ENCODE measurements at regions of chr1 and their contacts with region 1.

Region 1: GRCh38 chr1:102434421-102434820 is 437.7 kb upstream of the OLFM3 start:
- DNase-seq: peak; percentile 10
- ATAC-seq: peak; percentile 42; the same call in 1 of the 2 replicates
- H3K4me3 ChIP-seq: no peak overlapping the region
- H3K27ac ChIP-seq: no peak overlapping the region
- H3K4me1 ChIP-seq: no peaks in the 10 kb centered on the region
- H3K27me3 ChIP-seq: no peaks in the 10 kb centered on the region
- CTCF ChIP-seq: peak; percentile 10 to 56 (median 41); a peak in 4 of 6 replicates
- POLR2A ChIP-seq: no peak
- RAD21 ChIP-seq: peak; percentile 53

Region 2: DNA sequence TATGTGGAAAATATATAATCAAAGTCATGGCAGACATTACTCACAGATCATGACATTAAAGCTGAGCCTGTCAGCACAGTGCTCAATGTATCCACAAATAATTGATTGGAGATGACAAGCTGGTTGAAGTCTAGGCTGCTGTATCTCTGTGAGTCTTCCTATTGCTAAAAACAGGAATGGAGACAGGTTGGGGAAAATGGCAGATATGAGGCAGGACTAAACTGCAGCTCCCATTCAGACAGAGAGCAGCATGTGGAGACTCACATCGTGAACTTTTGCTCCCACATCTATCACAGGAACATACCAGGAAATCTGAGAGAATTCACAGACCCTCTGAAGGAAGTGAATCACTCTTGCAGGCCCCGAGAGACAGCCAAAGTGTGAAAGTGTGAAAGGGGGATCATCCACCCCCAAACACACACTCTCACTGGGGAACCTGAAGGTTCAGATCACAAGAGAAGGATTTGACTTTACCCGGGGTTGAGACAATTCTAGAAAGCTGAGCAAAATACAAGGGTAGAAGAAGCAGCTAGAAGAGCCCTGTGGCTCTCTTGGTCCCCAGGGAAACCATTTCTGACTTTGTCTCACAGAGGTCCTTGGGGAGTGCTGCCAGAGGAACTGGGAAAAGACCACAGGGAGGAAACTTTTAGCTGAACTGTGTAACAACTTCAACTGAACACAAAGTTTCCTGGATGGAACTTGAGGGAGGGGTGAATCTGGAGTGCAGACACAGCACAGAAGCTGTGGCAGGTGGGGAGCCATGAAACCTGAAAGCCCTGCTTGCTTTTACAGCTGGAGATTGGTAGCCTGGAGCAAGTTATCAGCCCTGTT is 1024.2 kb before region 1 on chr1:
- CTCF ChIA-PET with region 1: no interaction called
- POLR2A ChIA-PET with region 1: no interaction called
- RAD21 ChIA-PET with region 1: no interaction called
- intact Hi-C with region 1: no loop called
- DNase-seq: no peak
- ATAC-seq: no peak
- H3K4me3 ChIP-seq: no peak overlapping the region
- H3K27ac ChIP-seq: no peak overlapping the region
- H3K4me1 ChIP-seq: no peaks in the 10 kb centered on the region
- H3K27me3 ChIP-seq: no peaks in the 10 kb centered on the region
- CTCF ChIP-seq: no peak
- POLR2A ChIP-seq: no peak
- RAD21 ChIP-seq: no peak

Region 3: GRCh38 chr1:101820071-101820470 is 614.4 kb before region 1 on chr1:
- CTCF ChIA-PET with region 1: no interaction called
- POLR2A ChIA-PET with region 1: no interaction called
- RAD21 ChIA-PET with region 1: no interaction called
- intact Hi-C with region 1: loop called (anchors 5 kb)
- DNase-seq: peak; percentile 16
- ATAC-seq: peak; percentile 57; the same call in 1 of the 2 replicates
- H3K4me3 ChIP-seq: no peak overlapping the region
- H3K27ac ChIP-seq: no peak overlapping the region
- H3K4me1 ChIP-seq: no peaks in the 10 kb centered on the region
- H3K27me3 ChIP-seq: no peaks in the 10 kb centered on the region
- CTCF ChIP-seq: peak in 2 of 3 experiments; percentile 29 to 38; a peak in 2 of 6 replicates
- POLR2A ChIP-seq: no peak
- RAD21 ChIP-seq: peak; percentile 58

Region 4: GRCh38 chr1:102296116-102296515 is 138.3 kb before region 1 on chr1:
- CTCF ChIA-PET with region 1: no interaction called
- POLR2A ChIA-PET with region 1: no interaction called
- RAD21 ChIA-PET with region 1: no interaction called
- intact Hi-C with region 1: no loop called
- DNase-seq: no peak
- ATAC-seq: no peak
- H3K4me3 ChIP-seq: no peak overlapping the region
- H3K27ac ChIP-seq: no peak overlapping the region
- H3K4me1 ChIP-seq: no peaks in the 10 kb centered on the region
- H3K27me3 ChIP-seq: no peaks in the 10 kb centered on the region
- CTCF ChIP-seq: no peak
- POLR2A ChIP-seq: no peak
- RAD21 ChIP-seq: no peak

Region 5: DNA sequence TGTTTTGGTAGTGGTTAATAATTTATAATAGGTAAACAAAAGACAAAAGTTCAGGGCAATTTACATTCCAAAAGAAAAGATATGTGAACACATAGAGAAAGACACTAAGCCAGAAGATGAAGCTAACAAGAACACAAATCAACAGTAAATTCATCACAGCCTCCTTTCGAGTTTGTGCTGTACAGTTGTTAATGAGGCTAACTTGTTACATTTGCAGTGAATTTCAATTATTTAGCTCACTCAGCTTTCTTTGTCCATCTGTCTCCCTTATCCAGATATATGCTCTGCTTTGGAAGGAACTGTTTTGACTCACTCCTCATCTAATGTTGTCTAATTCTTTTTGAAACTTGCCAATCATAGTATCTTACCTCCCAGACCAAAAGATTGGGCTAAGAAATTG is 14.4 kb before region 1 on chr1:
- CTCF ChIA-PET with region 1: no interaction called
- POLR2A ChIA-PET with region 1: no interaction called
- RAD21 ChIA-PET with region 1: no interaction called
- intact Hi-C with region 1: no loop called
- DNase-seq: no peak
- ATAC-seq: no peak
- H3K4me3 ChIP-seq: no peak overlapping the region
- H3K27ac ChIP-seq: no peak overlapping the region
- H3K4me1 ChIP-seq: no peaks in the 10 kb centered on the region
- H3K27me3 ChIP-seq: no peaks in the 10 kb centered on the region
- CTCF ChIP-seq: no peak
- POLR2A ChIP-seq: no peak
- RAD21 ChIP-seq: no peak

Region 6: GRCh38 chr1:102676926-102677325 is 242.5 kb after region 1 on chr1:
- CTCF ChIA-PET with region 1: no interaction called
- POLR2A ChIA-PET with region 1: no interaction called
- RAD21 ChIA-PET with region 1: no interaction called
- intact Hi-C with region 1: no loop called
- DNase-seq: no peak
- ATAC-seq: no peak
- H3K4me3 ChIP-seq: no peak overlapping the region
- H3K27ac ChIP-seq: no peak overlapping the region
- H3K4me1 ChIP-seq: no peaks in the 10 kb centered on the region
- H3K27me3 ChIP-seq: no peaks in the 10 kb centered on the region
- CTCF ChIP-seq: no peak
- POLR2A ChIP-seq: no peak
- RAD21 ChIP-seq: no peak

Measured in HCT116 (cell line).